Activated CD8-positive, alpha-beta T cell treated with anti-CD3 and anti-CD28 coated beads for 36 hours (primary cell): ENCODE measurements at regions of chr1 and their contacts with region 1.

Region 1: GRCh38 chr1:203172128-203173010 is 3.3 kb downstream of the MYBPH start:
- DNase-seq: peak; percentile 56
- ATAC-seq: peak; percentile 74
- H3K4me3 Mint-ChIP-seq: no peak overlapping the region
- H3K27ac Mint-ChIP-seq: no peak overlapping the region
- H3K4me1 Mint-ChIP-seq: no peaks in the 10 kb centered on the region
- H3K27me3 Mint-ChIP-seq: no peaks in the 10 kb centered on the region
- CTCF ChIP-seq: peak; percentile 94

Region 2: DNA sequence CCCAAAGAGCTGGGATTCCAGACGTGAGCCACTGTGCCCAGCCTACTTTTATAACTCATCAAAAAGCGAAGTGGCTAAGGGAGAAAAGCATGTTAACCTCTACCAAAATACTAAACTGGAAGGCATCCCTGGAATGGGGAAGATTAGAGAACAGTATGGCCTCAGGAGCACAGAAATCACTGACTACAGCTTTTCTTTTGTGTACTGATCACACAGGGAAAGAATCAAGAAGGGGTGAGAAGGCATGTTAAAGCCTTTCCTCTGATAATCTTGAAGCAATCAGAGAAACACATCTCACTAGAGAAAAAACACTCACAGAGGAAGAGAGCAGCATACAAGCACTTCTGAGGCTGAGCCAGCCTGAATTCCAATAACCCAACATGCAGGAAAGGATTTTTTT is 350.9 kb before region 1 on chr1:
- CTCF ChIA-PET with region 1: no interaction called
- POLR2A ChIA-PET with region 1: no interaction called
- intact Hi-C with region 1: no loop called
- DNase-seq: no peak
- ATAC-seq: no peak
- H3K4me3 Mint-ChIP-seq: no peak overlapping the region
- H3K27ac Mint-ChIP-seq: no peak overlapping the region
- H3K4me1 Mint-ChIP-seq: no peaks in the 10 kb centered on the region
- H3K27me3 Mint-ChIP-seq: peaks cover 4% of the 10 kb centered on the region
- CTCF ChIP-seq: no peak

Region 3: GRCh38 chr1:203084588-203085502 is 87.5 kb before region 1 on chr1:
- CTCF ChIA-PET with region 1: interaction called, 12 read pairs
- POLR2A ChIA-PET with region 1: no interaction called
- intact Hi-C with region 1: no loop called
- DNase-seq: peak; percentile 58
- ATAC-seq: peak; percentile 71
- H3K4me3 Mint-ChIP-seq: no peak overlapping the region
- H3K27ac Mint-ChIP-seq: no peak overlapping the region
- H3K4me1 Mint-ChIP-seq: no peaks in the 10 kb centered on the region
- H3K27me3 Mint-ChIP-seq: peaks cover 9% of the 10 kb centered on the region
- CTCF ChIP-seq: peak; percentile 66

Region 4: DNA sequence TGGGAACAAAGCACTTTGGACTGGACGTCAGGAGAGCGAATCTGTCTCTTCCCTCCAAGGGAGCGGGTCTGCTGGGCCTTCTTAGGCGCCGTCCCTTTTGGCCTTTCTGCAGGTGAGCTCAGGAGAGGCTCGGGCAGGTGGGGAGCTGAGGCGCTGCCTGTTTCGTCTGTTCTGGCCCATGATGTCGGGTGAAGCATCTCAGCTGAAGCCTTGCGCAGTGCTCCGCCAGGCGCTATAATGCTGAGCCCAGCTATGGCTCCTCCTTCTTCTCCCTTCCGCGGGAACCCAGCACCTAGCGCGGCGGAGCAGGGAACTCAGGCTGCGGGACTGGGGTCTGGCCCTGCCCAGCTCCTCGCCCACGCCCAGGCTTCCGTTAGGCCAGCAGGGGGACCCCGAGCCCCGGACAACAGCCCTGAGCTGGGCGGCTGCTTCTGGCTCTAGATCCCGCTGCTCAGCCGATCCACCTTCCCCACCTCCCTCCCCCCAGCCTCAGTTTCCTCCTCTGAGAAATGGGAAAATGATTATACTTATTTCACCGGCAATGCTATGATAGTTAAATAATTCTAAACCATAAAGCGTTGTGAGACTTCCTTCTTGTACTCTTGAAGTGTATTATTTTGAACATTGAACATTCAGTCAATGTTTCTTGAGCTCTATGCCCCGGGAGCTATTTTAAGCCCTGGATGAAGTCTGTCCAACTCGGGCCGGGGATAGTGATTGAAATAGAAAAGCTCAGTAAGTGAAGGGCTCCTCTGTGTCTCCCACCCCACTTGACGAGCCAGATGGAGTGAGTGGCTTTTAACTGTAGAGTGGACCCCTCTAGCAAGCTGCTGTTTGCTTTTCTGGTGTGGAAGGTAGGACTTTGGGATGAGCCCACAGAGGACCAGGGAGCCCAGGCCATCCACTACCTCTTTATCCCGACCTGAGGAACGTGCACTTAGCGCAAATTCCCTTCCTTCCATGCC is 54.5 kb before region 1 on chr1:
- CTCF ChIA-PET with region 1: interaction called, 19 read pairs
- POLR2A ChIA-PET with region 1: no interaction called
- intact Hi-C with region 1: no loop called
- DNase-seq: peak; percentile 74
- ATAC-seq: peak; percentile 77
- H3K4me3 Mint-ChIP-seq: no peak overlapping the region
- H3K27ac Mint-ChIP-seq: no peak overlapping the region
- H3K4me1 Mint-ChIP-seq: no peaks in the 10 kb centered on the region
- H3K27me3 Mint-ChIP-seq: peaks cover 34% of the 10 kb centered on the region
- CTCF ChIP-seq: peak; percentile 55

Region 5: DNA sequence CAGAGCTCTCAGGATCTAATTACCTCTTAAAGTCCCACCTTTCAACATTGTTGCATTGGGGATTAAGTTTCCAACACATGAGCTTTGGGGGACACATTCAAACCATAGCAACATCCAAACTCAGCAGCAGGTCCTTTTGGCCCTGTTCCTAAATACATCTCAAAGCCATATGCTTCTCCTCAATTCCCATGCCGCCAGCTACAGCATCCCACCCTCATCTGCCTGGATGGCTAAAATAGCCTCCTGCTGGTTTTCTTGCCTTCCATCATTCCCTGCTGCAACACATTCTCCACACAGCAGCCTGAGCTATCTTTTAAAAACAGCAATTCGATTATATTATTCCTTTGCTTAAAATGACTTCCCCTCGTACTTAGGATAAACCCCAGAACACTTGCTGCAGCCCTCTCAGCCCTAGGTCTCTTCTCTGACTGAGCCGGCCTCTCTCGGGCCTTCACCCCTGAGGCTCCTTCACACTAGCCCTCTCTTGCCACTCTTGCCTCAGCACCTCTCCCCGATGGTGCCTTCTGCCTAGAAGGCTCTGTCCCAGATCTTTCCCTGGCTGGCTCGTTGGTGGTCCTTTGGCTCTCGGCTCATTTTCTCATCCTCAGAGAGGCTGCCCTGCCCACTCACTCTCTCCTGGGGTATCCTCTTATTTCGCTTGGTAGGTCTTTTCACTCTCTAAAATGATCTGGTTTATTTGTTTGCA is 13.3 kb before region 1 on chr1:
- CTCF ChIA-PET with region 1: interaction called, 18 read pairs
- POLR2A ChIA-PET with region 1: interaction called, 4 read pairs
- intact Hi-C with region 1: no loop called
- DNase-seq: no peak
- ATAC-seq: no peak
- H3K4me3 Mint-ChIP-seq: no peak overlapping the region
- H3K27ac Mint-ChIP-seq: no peak overlapping the region
- H3K4me1 Mint-ChIP-seq: no peaks in the 10 kb centered on the region
- H3K27me3 Mint-ChIP-seq: peaks cover 11% of the 10 kb centered on the region
- CTCF ChIP-seq: no peak

Region 6: DNA sequence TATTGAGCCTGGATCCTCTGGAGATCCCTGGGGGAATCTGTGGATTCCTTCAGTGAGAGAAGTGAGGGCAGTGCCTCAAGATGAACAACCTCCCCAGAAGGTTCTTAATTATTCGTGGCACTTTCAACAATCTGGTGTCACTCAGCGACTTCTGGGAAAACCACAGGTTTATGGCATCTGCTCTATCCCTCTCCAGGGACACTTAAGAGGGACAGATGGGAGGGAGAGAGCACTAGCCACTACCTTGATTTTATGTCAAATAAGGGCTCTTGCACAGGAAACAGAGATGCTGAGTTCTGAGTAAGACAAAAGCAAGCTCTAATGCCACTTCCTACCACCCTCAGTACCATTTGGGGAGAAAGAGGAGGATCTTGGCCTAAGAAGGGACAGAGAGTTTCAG is 35.4 kb after region 1 on chr1:
- CTCF ChIA-PET with region 1: interaction called, 12 read pairs
- POLR2A ChIA-PET with region 1: no interaction called
- intact Hi-C with region 1: no loop called
- DNase-seq: no peak
- ATAC-seq: no peak
- H3K4me3 Mint-ChIP-seq: no peak overlapping the region
- H3K27ac Mint-ChIP-seq: no peak overlapping the region
- H3K4me1 Mint-ChIP-seq: no peaks in the 10 kb centered on the region
- H3K27me3 Mint-ChIP-seq: no peaks in the 10 kb centered on the region
- CTCF ChIP-seq: no peak

Region 7: GRCh38 chr1:203340112-203340804 is 167.9 kb after region 1 on chr1:
- CTCF ChIA-PET with region 1: no interaction called
- POLR2A ChIA-PET with region 1: no interaction called
- intact Hi-C with region 1: no loop called
- DNase-seq: peak; percentile 71
- ATAC-seq: peak; percentile 81
- H3K4me3 Mint-ChIP-seq: no peak overlapping the region
- H3K27ac Mint-ChIP-seq: no peak overlapping the region
- H3K4me1 Mint-ChIP-seq: peaks cover 17% of the 10 kb centered on the region
- H3K27me3 Mint-ChIP-seq: peaks cover 11% of the 10 kb centered on the region
- CTCF ChIP-seq: peak; percentile 91